Breast epithelium (tissue), 4 donors: ENCODE measurements at regions of chr6 and their contacts with region 1.

Region 1: GRCh38 chr6:32879691-32880090 is 25.7 kb downstream of the PSMB9 start:
- DNase-seq: no peak
- H3K4me3 ChIP-seq: no peak overlapping the region
- H3K27ac ChIP-seq: no peak overlapping the region
- H3K4me1 ChIP-seq: no peaks in the 10 kb centered on the region
- H3K27me3 ChIP-seq: no peaks in the 10 kb centered on the region
- CTCF ChIP-seq: no peak
- POLR2A ChIP-seq: no peak

Region 2: DNA sequence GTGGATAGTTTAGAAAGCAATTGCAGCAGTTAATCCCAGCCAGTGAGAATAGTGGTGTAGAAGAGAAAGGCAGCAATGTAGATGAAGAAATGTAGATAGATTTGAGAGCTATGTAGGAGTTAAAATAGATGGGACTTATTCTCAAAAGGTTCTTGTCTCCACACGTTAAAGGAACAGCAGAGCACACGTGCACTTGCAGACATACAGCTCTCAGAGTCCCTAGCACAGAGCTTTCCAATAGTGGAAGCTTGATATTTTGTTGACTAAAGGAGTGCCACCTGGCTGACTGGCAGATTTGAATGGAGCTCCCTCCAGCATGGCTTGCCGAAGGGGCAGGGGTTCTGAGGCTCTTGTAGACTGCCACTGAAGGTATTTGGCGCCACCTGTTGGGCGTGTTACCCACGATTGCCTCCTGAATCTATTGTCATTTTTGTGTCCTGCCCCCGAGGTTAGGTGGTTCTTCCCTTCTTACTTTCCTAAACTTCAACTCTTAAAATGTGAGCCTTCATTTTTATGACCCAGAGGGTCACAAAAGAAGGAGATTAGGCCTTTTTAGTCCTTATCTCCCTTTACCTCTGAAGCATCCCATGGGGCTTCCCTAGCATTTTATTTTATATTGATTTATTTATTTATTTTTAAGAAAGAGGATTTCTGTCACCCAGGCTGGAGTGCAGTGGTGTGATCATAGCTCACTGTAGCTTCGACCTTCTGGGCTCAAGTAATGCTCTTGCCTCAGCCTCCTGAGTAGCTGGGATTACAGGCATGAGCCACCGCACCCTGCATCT is 105.1 kb after region 1 on chr6:
- intact Hi-C with region 1: loop called (anchors 5 kb)
- DNase-seq: peak; percentile 90 to 92
- H3K4me3 ChIP-seq: no peak overlapping the region
- H3K27ac ChIP-seq: no peak overlapping the region
- H3K4me1 ChIP-seq: no peaks in the 10 kb centered on the region
- H3K27me3 ChIP-seq: no peaks in the 10 kb centered on the region
- CTCF ChIP-seq: peak; percentile 65 to 92 (median 89)
- POLR2A ChIP-seq: no peak

Region 3: DNA sequence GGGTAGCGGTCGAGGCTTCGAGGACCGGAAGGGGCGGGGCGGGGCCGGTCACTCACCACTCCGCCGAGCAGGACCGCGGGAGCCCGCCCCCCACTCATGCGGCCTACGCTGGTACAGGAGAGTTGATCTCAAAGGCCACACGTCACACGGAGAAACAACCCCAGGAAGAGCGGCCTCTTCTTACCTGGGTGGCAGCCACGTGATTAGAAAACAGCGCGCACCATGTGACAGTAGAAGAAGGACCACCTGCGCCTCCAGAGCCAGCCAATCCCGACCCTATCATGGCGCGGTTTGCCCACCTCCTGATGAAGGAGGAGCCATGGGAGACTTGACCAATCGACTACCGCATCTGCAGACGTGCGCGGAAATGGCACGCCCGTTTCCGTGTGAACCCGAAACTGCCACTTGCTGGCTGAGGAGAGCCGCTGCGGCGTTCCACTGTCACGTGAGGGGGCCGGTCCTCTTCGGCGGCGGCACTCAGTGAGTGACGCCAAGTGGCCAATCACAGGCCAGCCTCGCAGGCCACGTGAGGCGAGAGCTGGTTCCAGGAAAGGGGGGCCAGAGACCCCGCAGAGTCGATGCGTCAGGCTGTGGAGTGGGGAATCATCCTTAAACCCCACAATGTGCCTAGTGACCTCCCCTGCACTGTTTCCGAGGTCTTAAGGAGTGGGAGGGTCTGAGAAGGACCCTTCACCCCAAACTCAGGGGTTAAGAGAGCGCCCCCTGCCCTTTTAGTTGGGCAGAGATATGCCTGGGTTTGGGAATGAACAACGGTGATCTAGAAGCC is 538.4 kb after region 1 on chr6 and contains the start of gene CUTA:
- intact Hi-C with region 1: loop called (anchors 10 kb)
- DNase-seq: peak; percentile 99 to 100
- H3K4me3 ChIP-seq: peak within 1 kb of the TSS; percentile 50 to 77 (median 70)
- H3K27ac ChIP-seq: peak within 1 kb of the TSS; percentile 95 to 99
- H3K4me1 ChIP-seq: peaks cover 2 to 5% of the 10 kb centered on the region in 2 donors
- H3K27me3 ChIP-seq: no peaks in the 10 kb centered on the region
- CTCF ChIP-seq: peak in 2 of 3 donors; percentile 29 to 44
- POLR2A ChIP-seq: peak; percentile 84
- total RNA-seq, gene CUTA: 81.3 to 123 (median 111) TPM